ENCODE measurements at regions of chr15 and their contacts with region 1.

Region 1: GRCh38 chr15:47756872-47757271 is 39.6 kb downstream of the SEMA6D start:
- DNase-seq: peak; percentile 76
- H3K4me3 ChIP-seq: no peak overlapping the region
- H3K27ac ChIP-seq: no peak overlapping the region
- H3K4me1 ChIP-seq: peaks cover 7% of the 10 kb centered on the region
- H3K27me3 ChIP-seq: no peaks in the 10 kb centered on the region
- CTCF ChIP-seq: no peak

Region 2: GRCh38 chr15:47773163-47773562 is 16.3 kb after region 1 on chr15:
- CTCF ChIA-PET with region 1: no interaction called
- dilution Hi-C with region 1: no loop called
- in situ Hi-C with region 1: no loop called
- intact Hi-C with region 1: no loop called
- DNase-seq: no peak
- H3K4me3 ChIP-seq: no peak overlapping the region
- H3K27ac ChIP-seq: no peak overlapping the region
- H3K4me1 ChIP-seq: no peaks in the 10 kb centered on the region
- H3K27me3 ChIP-seq: no peaks in the 10 kb centered on the region
- CTCF ChIP-seq: no peak

Region 3: DNA sequence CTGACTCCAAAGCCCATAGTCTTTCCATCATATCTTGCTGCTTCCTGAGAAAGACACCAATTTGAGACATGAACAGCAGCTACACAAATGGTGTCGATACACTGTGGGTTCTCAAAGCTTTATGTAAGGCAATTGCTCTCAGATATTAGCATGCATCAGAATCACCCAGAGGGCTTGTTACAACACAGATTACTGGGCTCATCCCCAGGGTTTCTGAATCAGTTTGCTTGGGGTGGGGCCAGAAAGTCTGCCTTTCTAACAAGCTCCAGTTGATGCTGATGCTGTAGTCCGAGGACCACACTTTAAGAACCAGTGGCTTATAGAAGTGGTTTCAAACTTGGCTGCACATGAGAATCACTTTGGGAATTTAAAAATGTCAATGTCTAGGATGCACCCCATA is 46.9 kb after region 1 on chr15:
- CTCF ChIA-PET with region 1: interaction called, 3 read pairs
- dilution Hi-C with region 1: no loop called
- in situ Hi-C with region 1: no loop called
- intact Hi-C with region 1: loop called (anchors 2 kb)
- DNase-seq: peak; percentile 65
- H3K4me3 ChIP-seq: no peak overlapping the region
- H3K27ac ChIP-seq: no peak overlapping the region
- H3K4me1 ChIP-seq: peaks cover 16% of the 10 kb centered on the region
- H3K27me3 ChIP-seq: no peaks in the 10 kb centered on the region
- CTCF ChIP-seq: no peak

Measured in mammary epithelial cell (primary cell).